Panc1 (cell line): ENCODE measurements at regions of chrX and their contacts with region 1.

Region 1: DNA sequence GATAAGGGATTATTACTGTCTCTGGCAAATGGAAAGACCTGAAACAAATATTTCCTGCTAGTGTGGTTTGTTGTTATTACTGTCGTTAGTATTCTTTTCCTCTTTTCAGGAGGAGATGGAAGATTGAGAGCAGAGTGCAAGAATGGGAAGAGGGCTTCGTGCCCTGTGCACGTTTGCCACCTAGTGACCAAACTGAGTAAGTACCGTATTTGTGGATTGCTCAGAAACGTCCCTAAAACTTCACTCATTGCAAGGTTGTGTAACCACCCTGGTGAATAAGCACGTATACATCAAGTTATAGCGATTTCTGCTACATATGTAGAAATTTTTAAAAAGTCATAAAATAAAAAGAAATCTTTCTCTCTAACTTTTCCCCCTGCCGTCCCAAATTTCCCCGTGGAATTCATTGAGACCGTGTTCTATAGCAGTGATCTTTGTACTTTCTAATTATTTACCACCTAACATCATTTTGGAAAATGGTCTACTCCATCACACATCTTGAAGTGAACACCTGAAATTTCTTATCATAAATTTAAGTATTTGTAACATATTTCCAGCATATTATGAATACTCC is 24.3 kb downstream of the LINC00632 start:
- DNase-seq: peak; percentile 55
- ATAC-seq: peak; percentile 89
- H3K4me3 ChIP-seq: no peak overlapping the region
- H3K27ac ChIP-seq: no peak overlapping the region
- H3K4me1 ChIP-seq: no peaks in the 10 kb centered on the region
- H3K27me3 ChIP-seq: no peaks in the 10 kb centered on the region
- CTCF ChIP-seq: peak; percentile 84

Region 2: GRCh38 chrX:140602140-140602539 is 131.7 kb before region 1 on chrX:
- CTCF ChIA-PET with region 1: no interaction called
- POLR2A ChIA-PET with region 1: no interaction called
- in situ Hi-C with region 1: no loop called
- intact Hi-C with region 1: no loop called
- DNase-seq: no peak
- ATAC-seq: no peak
- H3K4me3 ChIP-seq: no peak overlapping the region
- H3K27ac ChIP-seq: no peak overlapping the region
- H3K4me1 ChIP-seq: no peaks in the 10 kb centered on the region
- H3K27me3 ChIP-seq: no peaks in the 10 kb centered on the region
- CTCF ChIP-seq: no peak

Region 3: GRCh38 chrX:140701480-140701879 is 32.4 kb before region 1 on chrX:
- CTCF ChIA-PET with region 1: interaction called, 6 read pairs
- POLR2A ChIA-PET with region 1: no interaction called
- in situ Hi-C with region 1: no loop called
- intact Hi-C with region 1: loop called (anchors 1 kb)
- DNase-seq: no peak
- ATAC-seq: peak; percentile 70; the same call in 1 of the 2 replicates
- H3K4me3 ChIP-seq: no peak overlapping the region
- H3K27ac ChIP-seq: no peak overlapping the region
- H3K4me1 ChIP-seq: no peaks in the 10 kb centered on the region
- H3K27me3 ChIP-seq: no peaks in the 10 kb centered on the region
- CTCF ChIP-seq: peak; percentile 66; the same call in 1 of the 2 replicates

Region 4: DNA sequence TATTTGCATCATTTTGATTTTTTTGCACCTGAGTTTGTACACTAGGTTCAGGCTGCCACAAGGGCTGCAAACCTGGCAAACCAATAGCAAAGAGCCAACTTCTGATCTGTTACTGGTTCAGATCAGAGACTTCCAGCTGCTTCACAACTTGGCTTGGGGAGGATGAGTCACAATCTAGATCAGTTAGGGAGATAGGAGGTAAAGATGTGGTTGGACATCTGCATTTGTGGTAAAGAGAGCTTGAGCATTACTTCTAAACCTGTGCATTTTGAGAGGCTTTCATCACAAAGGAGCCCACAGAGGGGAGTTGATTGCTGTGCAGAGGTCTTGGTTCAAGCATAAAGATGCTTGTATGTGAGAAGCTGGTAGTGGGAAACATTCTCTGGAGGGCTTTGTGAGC is 10.2 kb after region 1 on chrX:
- CTCF ChIA-PET with region 1: no interaction called
- POLR2A ChIA-PET with region 1: no interaction called
- in situ Hi-C with region 1: no loop called
- intact Hi-C with region 1: no loop called
- DNase-seq: no peak
- ATAC-seq: no peak
- H3K4me3 ChIP-seq: no peak overlapping the region
- H3K27ac ChIP-seq: no peak overlapping the region
- H3K4me1 ChIP-seq: no peaks in the 10 kb centered on the region
- H3K27me3 ChIP-seq: no peaks in the 10 kb centered on the region
- CTCF ChIP-seq: no peak